ENCODE measurements at regions of chr2 and their contacts with region 1.

Region 1: GRCh38 chr2:85538486-85539360 is at the start of gene MAT2A:
- DNase-seq: peak; percentile 65 to 92 (median 86)
- ATAC-seq: peak; percentile 71
- H3K4me3 ChIP-seq: peak within 1 kb of the TSS; percentile 97
- H3K4me3 Mint-ChIP-seq: peak within 1 kb of the TSS; percentile 94
- H3K27ac ChIP-seq: peak within 1 kb of the TSS; percentile 80 to 84
- H3K27ac Mint-ChIP-seq: peak within 1 kb of the TSS; percentile 92
- H3K4me1 ChIP-seq: peaks cover 29% of the 10 kb centered on the region
- H3K4me1 Mint-ChIP-seq: peaks cover 52% of the 10 kb centered on the region
- H3K27me3 ChIP-seq: no peaks in the 10 kb centered on the region
- H3K27me3 Mint-ChIP-seq: no peaks in the 10 kb centered on the region
- CTCF ChIP-seq: peak; percentile 47
- total RNA-seq, gene MAT2A: 121 to 122 TPM

Region 2: DNA sequence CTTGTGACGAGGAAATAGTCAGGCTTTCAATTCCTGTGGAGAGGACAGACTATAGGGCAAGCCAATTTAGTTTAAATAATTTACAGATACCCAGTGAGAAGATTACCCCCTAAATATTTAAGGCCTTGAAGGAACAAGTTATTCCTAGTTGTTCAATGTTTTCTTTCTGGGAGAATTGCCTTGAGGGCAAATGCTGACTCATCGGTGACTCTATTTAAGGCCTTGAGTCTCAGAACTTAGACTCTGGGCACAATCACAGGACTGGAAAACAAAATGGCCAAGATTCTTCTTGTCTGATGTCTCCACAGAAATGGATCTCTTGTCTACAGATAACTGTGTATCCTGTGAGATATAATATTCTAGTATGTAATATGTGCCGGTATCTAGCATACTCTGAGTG is 1546.7 kb before region 1 on chr2:
- CTCF ChIA-PET with region 1: no interaction called
- POLR2A ChIA-PET with region 1: no interaction called
- intact Hi-C with region 1: no loop called
- DNase-seq: no peak
- ATAC-seq: no peak
- H3K4me3 ChIP-seq: no peak overlapping the region
- H3K4me3 Mint-ChIP-seq: no peak overlapping the region
- H3K27ac ChIP-seq: no peak overlapping the region
- H3K27ac Mint-ChIP-seq: no peak overlapping the region
- H3K4me1 ChIP-seq: no peaks in the 10 kb centered on the region
- H3K4me1 Mint-ChIP-seq: no peaks in the 10 kb centered on the region
- H3K27me3 ChIP-seq: peaks cover 0 to 3% of the 10 kb centered on the region in 2 experiments
- H3K27me3 Mint-ChIP-seq: peaks cover 14% of the 10 kb centered on the region
- CTCF ChIP-seq: no peak

Region 3: GRCh38 chr2:85334928-85335327 is 203.8 kb before region 1 on chr2:
- CTCF ChIA-PET with region 1: no interaction called
- POLR2A ChIA-PET with region 1: no interaction called
- intact Hi-C with region 1: no loop called
- DNase-seq: no peak
- ATAC-seq: no peak
- H3K4me3 ChIP-seq: no peak overlapping the region
- H3K4me3 Mint-ChIP-seq: no peak overlapping the region
- H3K27ac ChIP-seq: no peak overlapping the region
- H3K27ac Mint-ChIP-seq: no peak overlapping the region
- H3K4me1 ChIP-seq: no peaks in the 10 kb centered on the region
- H3K4me1 Mint-ChIP-seq: no peaks in the 10 kb centered on the region
- H3K27me3 ChIP-seq: no peaks in the 10 kb centered on the region
- H3K27me3 Mint-ChIP-seq: no peaks in the 10 kb centered on the region
- CTCF ChIP-seq: no peak

Region 4: DNA sequence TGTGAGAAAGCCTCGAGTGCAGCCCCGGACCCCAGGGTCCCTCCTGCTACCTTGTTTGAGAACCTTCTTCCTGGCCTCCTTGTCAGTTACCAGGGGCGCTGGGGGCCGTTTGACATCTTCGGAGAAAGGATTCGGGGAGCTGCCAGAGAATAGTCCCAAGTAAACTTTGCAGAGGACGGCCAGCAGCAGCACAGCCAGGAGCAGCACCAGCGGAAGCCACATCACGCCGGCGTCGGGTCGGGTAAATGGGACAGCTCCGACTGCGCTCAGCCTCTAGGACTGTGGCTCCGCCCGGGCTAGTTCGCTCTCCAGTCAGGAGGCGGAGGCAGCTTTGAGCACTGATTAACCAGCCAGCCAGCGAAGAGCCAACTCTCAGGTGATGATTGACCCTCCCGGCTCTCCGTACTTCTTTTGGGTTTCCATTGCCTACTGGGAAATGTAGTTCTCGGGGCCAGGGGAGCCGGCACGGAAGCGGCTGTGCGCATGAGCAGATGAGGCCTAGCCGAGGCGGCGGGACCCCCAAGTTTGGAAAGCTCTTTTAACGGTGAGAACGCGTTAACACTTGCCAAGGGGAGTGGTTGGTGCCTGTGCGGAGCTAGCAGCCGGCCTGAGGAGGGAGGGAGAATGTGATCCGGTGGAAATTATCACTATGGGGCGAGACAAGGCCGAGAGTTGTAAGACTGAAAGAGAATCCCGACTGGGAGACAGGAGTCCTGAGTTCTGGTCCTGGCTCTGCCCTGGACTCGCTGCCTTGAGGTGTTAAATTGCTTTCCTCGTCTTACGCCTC is 184.2 kb before region 1 on chr2 and contains the starts of genes ELMOD3 and RETSAT:
- CTCF ChIA-PET with region 1: no interaction called
- POLR2A ChIA-PET with region 1: interaction called, 22 read pairs
- intact Hi-C with region 1: loop called in 1 of 2 experiments (anchors 5 kb)
- DNase-seq: peak; percentile 89 to 99 (median 94)
- ATAC-seq: peak; percentile 98
- H3K4me3 ChIP-seq: peak within 1 kb of the TSS; percentile 68
- H3K4me3 Mint-ChIP-seq: peak within 1 kb of the TSS; percentile 99
- H3K27ac ChIP-seq: peak within 1 kb of the TSS; percentile 75
- H3K27ac Mint-ChIP-seq: peak within 1 kb of the TSS; percentile 94
- H3K4me1 ChIP-seq: peaks cover 44% of the 10 kb centered on the region
- H3K4me1 Mint-ChIP-seq: peaks cover 63% of the 10 kb centered on the region
- H3K27me3 ChIP-seq: no peaks in the 10 kb centered on the region
- H3K27me3 Mint-ChIP-seq: no peaks in the 10 kb centered on the region
- CTCF ChIP-seq: no peak
- total RNA-seq, gene ELMOD3: 13.5 to 15.3 TPM
- total RNA-seq, gene RETSAT: 19.2 to 22.2 TPM

Region 5: GRCh38 chr2:85437488-85438284 is 101.0 kb before region 1 on chr2:
- CTCF ChIA-PET with region 1: interaction called, 3 read pairs
- POLR2A ChIA-PET with region 1: interaction called, 62 read pairs
- intact Hi-C with region 1: loop called in 1 of 2 experiments (anchors 1 kb)
- DNase-seq: peak; percentile 49 to 91 (median 70)
- ATAC-seq: peak; percentile 82
- H3K4me3 ChIP-seq: peak overlapping the region; percentile 51
- H3K4me3 Mint-ChIP-seq: peak overlapping the region; percentile 90
- H3K27ac ChIP-seq: peak overlapping the region; percentile 55 to 87
- H3K27ac Mint-ChIP-seq: peak overlapping the region; percentile 91
- H3K4me1 ChIP-seq: peaks cover 39% of the 10 kb centered on the region
- H3K4me1 Mint-ChIP-seq: peaks cover 37% of the 10 kb centered on the region
- H3K27me3 ChIP-seq: no peaks in the 10 kb centered on the region
- H3K27me3 Mint-ChIP-seq: no peaks in the 10 kb centered on the region
- CTCF ChIP-seq: no peak

Region 6: GRCh38 chr2:85561317-85561979 is 22.7 kb after region 1 on chr2 and contains the start of gene GGCX:
- CTCF ChIA-PET with region 1: no interaction called
- POLR2A ChIA-PET with region 1: interaction called, 25 read pairs
- intact Hi-C with region 1: loop called in 1 of 2 experiments (anchors 2 kb)
- DNase-seq: peak; percentile 88 to 97 (median 93)
- ATAC-seq: peak; percentile 89
- H3K4me3 ChIP-seq: peak within 1 kb of the TSS; percentile 81
- H3K4me3 Mint-ChIP-seq: peak within 1 kb of the TSS; percentile 99
- H3K27ac ChIP-seq: peak within 1 kb of the TSS; percentile 67 to 68
- H3K27ac Mint-ChIP-seq: peak within 1 kb of the TSS; percentile 95
- H3K4me1 ChIP-seq: peaks cover 20% of the 10 kb centered on the region
- H3K4me1 Mint-ChIP-seq: peaks cover 30% of the 10 kb centered on the region
- H3K27me3 ChIP-seq: no peaks in the 10 kb centered on the region
- H3K27me3 Mint-ChIP-seq: no peaks in the 10 kb centered on the region
- CTCF ChIP-seq: no peak
- total RNA-seq, gene GGCX: 22.9 to 27.6 TPM

Region 7: DNA sequence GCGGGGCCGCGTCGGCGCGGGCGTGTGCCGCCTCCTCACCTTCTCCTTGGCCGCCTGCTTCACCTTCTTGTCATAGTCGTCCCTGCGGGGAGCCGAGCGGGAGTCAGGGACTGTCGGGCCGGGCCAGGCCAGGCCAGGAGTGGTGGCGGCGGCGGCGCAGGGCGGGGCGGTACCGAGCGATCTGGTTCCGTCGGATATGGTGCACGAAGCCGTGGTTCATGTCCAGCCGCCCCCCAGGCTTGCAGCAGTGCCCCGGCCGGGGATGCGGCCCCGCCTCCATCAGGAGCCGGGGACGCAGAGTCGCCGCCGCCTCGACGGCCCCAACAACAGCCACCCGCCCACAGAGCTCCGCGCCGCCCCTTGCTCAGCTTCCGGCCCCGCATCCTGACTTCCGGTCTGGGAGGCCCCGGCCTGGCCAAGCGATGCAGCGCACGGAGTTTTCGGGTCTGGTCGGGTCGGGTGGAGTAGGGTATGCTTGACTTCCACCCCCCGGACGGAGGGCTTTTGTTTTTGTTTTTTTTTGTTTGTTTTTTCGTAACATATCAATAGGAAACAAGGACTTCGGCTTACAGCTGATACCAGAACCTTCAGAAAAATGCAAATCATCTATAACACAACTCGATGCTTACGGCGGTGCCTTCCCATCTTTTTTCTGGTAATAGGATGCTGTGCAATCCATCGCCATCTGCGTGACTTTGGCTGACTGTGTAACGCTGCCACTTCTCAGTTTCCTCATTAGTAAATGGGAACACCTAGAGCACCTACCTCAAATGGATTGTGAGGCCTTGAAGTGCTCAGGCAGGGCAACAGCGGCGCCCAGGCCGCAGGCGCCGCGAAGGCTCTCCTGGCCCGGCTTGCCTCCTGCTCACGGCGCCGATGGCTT is 73.2 kb after region 1 on chr2 and contains the start of gene C2orf68:
- CTCF ChIA-PET with region 1: interaction called, 4 read pairs
- POLR2A ChIA-PET with region 1: interaction called, 11 read pairs
- intact Hi-C with region 1: loop called in 1 of 2 experiments (anchors 2 kb)
- DNase-seq: peak; percentile 59 to 88 (median 79)
- ATAC-seq: peak; percentile 52
- H3K4me3 ChIP-seq: peak within 1 kb of the TSS; percentile 58
- H3K4me3 Mint-ChIP-seq: peak within 1 kb of the TSS; percentile 95
- H3K27ac ChIP-seq: peak within 1 kb of the TSS; percentile 74 to 82
- H3K27ac Mint-ChIP-seq: peak within 1 kb of the TSS; percentile 86
- H3K4me1 ChIP-seq: peaks cover 40% of the 10 kb centered on the region
- H3K4me1 Mint-ChIP-seq: peaks cover 39% of the 10 kb centered on the region
- H3K27me3 ChIP-seq: no peaks in the 10 kb centered on the region
- H3K27me3 Mint-ChIP-seq: no peaks in the 10 kb centered on the region
- CTCF ChIP-seq: no peak
- total RNA-seq, gene C2orf68: 31.0 to 31.2 TPM

Region 8: DNA sequence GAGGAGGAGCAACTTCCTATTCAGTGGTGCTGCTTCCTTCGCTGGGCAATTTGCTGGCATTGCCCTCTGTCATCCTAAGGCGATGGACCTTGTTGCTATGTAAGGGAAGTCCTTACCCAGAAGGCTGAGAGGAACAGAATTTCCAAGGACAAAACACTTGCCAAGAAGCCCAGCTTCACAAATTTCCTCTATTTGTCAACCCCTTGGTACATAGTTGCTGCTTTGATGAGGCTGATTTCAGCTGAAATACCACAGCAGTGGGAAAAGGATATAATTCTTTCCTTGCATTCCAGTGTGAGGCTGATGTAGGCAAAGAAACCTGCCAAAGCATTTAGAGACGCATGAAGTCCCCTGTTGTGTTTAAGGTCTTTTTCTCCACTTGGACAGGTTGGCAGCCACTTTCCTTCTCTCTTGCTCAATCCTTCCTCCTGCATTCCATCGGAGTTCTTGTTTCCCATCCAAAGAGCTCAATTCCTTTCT is 366.5 kb after region 1 on chr2:
- CTCF ChIA-PET with region 1: no interaction called
- POLR2A ChIA-PET with region 1: no interaction called
- intact Hi-C with region 1: no loop called
- DNase-seq: no peak
- ATAC-seq: no peak
- H3K4me3 ChIP-seq: no peak overlapping the region
- H3K4me3 Mint-ChIP-seq: no peak overlapping the region
- H3K27ac ChIP-seq: no peak overlapping the region
- H3K27ac Mint-ChIP-seq: no peak overlapping the region
- H3K4me1 ChIP-seq: no peaks in the 10 kb centered on the region
- H3K4me1 Mint-ChIP-seq: peaks cover 5% of the 10 kb centered on the region
- H3K27me3 ChIP-seq: no peaks in the 10 kb centered on the region
- H3K27me3 Mint-ChIP-seq: no peaks in the 10 kb centered on the region
- CTCF ChIP-seq: no peak

Measured in CD4-positive, alpha-beta T cell (primary cell).